ENCODE measurements at regions of chr3 and their contacts with region 1.

Region 1: DNA sequence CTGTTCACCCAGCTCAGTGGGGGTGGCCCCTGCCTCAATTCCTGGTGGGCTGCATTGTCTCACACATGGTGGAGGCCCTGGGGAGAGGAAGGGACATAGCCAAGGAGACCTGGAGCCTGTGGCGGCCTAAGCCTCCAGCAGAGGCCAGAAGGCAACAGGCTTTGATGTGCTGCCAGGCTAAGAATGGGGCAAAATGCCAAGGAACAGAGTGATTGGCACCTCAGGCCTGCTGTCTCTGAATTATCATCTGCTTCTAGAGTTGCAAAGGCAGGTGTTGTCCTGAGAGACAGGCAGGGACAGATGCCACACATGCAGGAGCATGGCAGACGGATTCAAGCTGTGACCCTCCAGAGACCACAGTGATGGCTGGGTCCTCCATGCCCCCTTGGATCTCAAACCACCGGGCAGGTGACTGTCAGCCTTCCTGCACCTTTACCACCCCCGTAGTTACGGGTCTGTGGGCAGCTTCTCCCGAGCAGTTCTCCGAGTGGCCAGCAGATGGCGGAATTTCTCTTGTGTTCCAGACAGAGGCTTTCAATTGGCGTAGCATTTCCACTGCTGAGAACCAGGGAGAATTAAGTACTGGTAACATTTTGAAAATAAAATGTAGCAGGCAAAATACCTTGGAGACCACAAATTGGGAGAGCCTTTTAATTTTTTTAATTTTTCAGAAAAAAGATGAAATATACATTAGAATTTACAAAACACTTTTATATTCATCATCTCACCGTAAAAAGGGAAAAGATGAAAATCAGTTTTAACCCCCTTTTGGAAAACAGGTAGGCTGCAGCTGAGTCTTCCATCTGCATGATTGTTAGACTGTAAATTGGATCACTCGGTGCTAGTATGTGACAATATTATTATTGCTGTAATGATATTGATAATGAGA is 525.5 kb upstream of the CFAP20DC start:
- DNase-seq: peak; percentile 90
- H3K4me3 Mint-ChIP-seq: no peak overlapping the region
- H3K27ac Mint-ChIP-seq: no peak overlapping the region
- H3K4me1 Mint-ChIP-seq: peaks cover 34% of the 10 kb centered on the region
- H3K27me3 Mint-ChIP-seq: no peaks in the 10 kb centered on the region
- CTCF ChIP-seq: peak; percentile 91

Region 2: DNA sequence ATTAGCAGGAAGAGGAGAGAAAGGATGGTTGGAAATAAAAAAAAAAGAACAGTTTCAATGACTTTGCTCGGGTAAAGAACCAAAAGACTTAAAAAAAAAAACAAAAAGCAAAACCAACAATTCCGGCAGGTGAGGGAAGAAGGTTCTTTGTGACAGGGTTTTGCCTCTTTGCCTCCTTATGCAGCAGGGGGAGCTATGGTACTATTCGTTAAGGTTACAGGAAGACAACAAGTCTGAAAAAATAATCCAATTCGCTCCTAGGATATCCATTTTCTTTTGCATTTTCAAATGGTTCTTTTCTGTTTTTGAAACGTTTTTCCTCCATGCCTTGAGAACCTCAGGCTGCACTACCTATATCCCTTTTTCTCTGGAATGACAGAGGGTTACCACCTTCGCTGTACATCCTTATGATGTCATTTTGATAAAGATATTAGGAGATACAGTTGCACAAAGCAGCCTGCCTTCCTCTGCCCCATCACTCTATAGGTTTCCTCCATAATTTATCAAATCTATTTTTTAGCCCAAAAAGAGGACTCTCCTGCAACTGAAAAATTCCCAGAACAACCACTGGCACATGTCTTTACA is 580.5 kb before region 1 on chr3:
- CTCF ChIA-PET with region 1: interaction called, 5 read pairs
- POLR2A ChIA-PET with region 1: no interaction called
- intact Hi-C with region 1: loop called (anchors 2 kb)
- DNase-seq: peak; percentile 83
- H3K4me3 Mint-ChIP-seq: no peak overlapping the region
- H3K27ac Mint-ChIP-seq: no peak overlapping the region
- H3K4me1 Mint-ChIP-seq: peaks cover 21% of the 10 kb centered on the region
- H3K27me3 Mint-ChIP-seq: no peaks in the 10 kb centered on the region
- CTCF ChIP-seq: peak; percentile 67

Region 3: DNA sequence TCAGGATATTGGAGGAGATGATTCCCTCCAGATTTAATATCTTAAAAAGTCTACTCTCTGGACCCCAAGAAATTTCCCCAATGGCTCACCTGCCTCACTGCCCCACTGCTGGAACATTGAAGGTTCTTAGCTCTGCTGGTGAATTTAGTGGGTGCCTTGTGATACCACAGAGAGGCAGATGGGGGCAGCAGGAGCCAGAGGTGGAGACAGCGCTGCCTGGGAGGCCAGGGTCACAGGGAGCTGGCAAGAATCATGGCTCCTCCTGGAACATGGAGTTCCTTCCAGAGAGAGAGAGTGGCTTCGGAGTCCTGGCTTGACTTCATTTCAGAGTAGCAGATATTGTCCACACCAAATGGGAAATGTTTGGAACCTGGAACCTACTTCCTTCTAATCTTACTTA is 262.0 kb before region 1 on chr3:
- CTCF ChIA-PET with region 1: interaction called, 12 read pairs
- POLR2A ChIA-PET with region 1: no interaction called
- intact Hi-C with region 1: loop called (anchors 1 kb)
- DNase-seq: peak; percentile 70
- H3K4me3 Mint-ChIP-seq: no peak overlapping the region
- H3K27ac Mint-ChIP-seq: peak overlapping the region; percentile 29
- H3K4me1 Mint-ChIP-seq: peaks cover 5% of the 10 kb centered on the region
- H3K27me3 Mint-ChIP-seq: no peaks in the 10 kb centered on the region
- CTCF ChIP-seq: peak; percentile 86

Region 4: DNA sequence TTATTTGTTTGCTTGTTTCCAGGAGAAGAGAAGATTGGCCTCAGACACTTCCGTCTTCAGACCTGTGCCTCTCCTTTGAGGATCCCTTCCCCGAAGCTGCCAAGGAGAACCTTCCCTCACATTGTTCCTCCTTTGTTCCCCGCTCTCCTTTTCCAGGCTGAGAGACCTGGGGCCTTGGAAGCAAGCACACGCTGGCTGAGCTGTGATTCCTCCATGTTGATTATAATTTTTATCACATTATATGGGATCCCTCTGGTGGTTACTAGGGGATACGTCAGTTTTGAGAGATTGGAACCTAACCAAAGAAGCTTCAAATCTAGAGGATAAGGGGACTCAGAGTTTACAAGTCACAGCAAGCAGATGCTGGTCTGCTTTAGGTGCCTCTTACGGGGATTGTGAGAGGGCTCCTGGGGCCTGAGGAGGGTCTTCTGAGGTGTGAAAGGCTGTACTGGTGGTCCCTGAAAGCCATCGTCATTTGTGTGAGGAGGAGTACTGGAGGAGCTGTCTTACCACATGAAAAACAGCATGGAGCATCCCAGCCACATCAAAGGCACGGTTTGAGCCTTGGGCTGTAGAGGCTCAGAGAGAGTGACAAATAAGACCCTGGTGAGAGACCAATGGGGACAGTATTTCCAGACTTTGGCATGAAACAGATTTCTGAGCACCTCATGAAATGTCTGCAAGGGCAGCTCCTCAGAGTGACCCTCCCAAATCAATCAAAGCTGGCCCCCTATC is 234.5 kb after region 1 on chr3:
- CTCF ChIA-PET with region 1: interaction called, 119 read pairs
- POLR2A ChIA-PET with region 1: interaction called, 7 read pairs
- intact Hi-C with region 1: loop called (anchors 1 kb)
- DNase-seq: peak; percentile 33
- H3K4me3 Mint-ChIP-seq: no peak overlapping the region
- H3K27ac Mint-ChIP-seq: peak overlapping the region; percentile 63
- H3K4me1 Mint-ChIP-seq: no peaks in the 10 kb centered on the region
- H3K27me3 Mint-ChIP-seq: no peaks in the 10 kb centered on the region
- CTCF ChIP-seq: peak; percentile 45

Region 5: DNA sequence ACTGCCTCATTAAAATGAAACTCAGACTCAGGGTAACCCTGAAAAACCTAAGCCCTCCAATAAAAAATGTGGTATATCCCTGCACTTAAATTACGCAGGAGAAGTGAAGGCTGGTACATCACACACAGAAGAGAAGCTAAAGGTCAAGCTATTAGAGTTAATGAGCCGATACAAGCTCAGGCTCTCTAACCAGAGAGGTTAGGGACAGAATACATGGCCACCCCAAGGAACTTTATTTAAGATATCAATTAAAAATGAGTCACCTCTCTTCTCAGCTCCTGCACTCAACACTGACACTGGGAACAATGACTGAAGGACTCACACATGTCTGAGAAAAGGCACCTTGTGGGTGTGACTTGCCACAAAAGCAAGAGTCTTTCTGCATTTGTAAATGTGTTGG is 275.1 kb after region 1 on chr3:
- CTCF ChIA-PET with region 1: interaction called, 124 read pairs
- POLR2A ChIA-PET with region 1: no interaction called
- intact Hi-C with region 1: no loop called
- DNase-seq: no peak
- H3K4me3 Mint-ChIP-seq: no peak overlapping the region
- H3K27ac Mint-ChIP-seq: no peak overlapping the region
- H3K4me1 Mint-ChIP-seq: no peaks in the 10 kb centered on the region
- H3K27me3 Mint-ChIP-seq: no peaks in the 10 kb centered on the region
- CTCF ChIP-seq: no peak

Region 6: GRCh38 chr3:59908280-59908679 is 332.9 kb after region 1 on chr3:
- CTCF ChIA-PET with region 1: no interaction called
- POLR2A ChIA-PET with region 1: no interaction called
- intact Hi-C with region 1: no loop called
- DNase-seq: peak; percentile 1
- H3K4me3 Mint-ChIP-seq: no peak overlapping the region
- H3K27ac Mint-ChIP-seq: no peak overlapping the region
- H3K4me1 Mint-ChIP-seq: no peaks in the 10 kb centered on the region
- H3K27me3 Mint-ChIP-seq: no peaks in the 10 kb centered on the region
- CTCF ChIP-seq: no peak

Region 7: DNA sequence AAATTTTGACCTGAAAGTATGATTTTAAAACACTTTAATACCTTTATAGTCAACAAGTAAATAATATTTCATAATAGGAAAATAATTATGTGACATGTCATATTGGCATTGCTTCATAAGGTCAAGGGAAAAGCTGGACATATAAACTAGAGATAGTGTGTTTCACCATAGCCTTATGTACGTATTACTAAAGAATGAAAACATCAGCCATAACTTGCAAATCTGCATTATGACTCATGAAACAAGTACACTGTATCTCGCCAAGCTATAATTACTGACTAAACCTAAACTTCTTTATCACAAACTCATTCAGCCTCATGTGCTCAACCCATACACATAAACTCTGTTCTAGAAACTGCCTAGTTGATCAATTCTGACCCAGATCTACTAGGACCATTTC is 725.8 kb after region 1 on chr3:
- CTCF ChIA-PET with region 1: no interaction called
- POLR2A ChIA-PET with region 1: no interaction called
- intact Hi-C with region 1: loop called (anchors 10 kb)
- DNase-seq: peak; percentile 65
- H3K4me3 Mint-ChIP-seq: no peak overlapping the region
- H3K27ac Mint-ChIP-seq: peak overlapping the region; percentile 10
- H3K4me1 Mint-ChIP-seq: peaks cover 20% of the 10 kb centered on the region
- H3K27me3 Mint-ChIP-seq: no peaks in the 10 kb centered on the region
- CTCF ChIP-seq: no peak

Measured in MCF 10A (cell line).